ENCODE measurements at regions of chr16 and their contacts with region 1.

Region 1: DNA sequence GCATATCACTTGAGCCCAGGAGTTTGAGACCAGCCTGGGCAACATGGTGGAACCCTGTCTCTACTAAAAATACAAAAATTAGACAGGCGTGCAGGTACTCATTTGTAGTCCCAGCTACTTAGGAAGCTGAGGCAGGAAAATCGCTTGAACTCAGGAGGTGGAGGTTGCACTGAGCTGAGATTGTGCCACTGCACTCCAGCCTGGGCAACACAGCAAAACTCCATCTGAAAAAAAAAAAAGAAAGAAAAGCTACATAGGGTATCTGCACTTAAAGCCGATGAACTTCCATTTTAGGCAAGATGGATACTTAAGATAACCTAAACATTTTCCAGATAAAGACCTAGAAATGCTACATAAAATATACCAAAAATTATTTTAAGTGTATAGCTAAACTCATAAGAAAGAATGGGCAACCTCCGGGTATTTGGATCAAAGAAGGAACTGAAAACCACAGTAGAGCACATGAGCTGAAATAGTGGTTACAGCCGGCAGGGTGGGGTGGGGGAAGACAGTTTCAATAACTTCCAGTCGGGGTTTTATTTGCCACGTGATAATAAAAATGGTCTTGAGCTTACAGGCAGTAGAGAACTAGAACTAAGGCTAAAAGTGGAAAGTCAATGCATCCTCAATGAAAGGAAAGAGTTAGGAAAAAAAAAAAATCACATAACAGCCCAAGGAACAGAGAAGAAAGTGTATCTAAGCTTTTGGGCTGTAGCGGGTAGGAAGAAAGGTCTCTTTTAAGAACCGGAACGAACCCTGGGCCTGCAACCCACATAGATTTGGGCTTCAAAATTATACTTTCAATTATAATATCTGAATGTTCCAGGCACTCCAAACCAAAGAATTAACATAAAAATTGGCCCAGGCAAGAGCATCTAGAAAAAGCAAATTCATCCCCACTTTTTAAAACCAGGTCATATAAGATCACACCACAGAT is 53.1 kb downstream of the CFDP1 start:
- DNase-seq: peak; percentile 81
- H3K4me3 Mint-ChIP-seq: peak overlapping the region; percentile 62
- H3K27ac Mint-ChIP-seq: peak overlapping the region; percentile 68
- H3K4me1 Mint-ChIP-seq: peaks cover 28% of the 10 kb centered on the region
- H3K27me3 Mint-ChIP-seq: peaks cover 33% of the 10 kb centered on the region

Region 2: DNA sequence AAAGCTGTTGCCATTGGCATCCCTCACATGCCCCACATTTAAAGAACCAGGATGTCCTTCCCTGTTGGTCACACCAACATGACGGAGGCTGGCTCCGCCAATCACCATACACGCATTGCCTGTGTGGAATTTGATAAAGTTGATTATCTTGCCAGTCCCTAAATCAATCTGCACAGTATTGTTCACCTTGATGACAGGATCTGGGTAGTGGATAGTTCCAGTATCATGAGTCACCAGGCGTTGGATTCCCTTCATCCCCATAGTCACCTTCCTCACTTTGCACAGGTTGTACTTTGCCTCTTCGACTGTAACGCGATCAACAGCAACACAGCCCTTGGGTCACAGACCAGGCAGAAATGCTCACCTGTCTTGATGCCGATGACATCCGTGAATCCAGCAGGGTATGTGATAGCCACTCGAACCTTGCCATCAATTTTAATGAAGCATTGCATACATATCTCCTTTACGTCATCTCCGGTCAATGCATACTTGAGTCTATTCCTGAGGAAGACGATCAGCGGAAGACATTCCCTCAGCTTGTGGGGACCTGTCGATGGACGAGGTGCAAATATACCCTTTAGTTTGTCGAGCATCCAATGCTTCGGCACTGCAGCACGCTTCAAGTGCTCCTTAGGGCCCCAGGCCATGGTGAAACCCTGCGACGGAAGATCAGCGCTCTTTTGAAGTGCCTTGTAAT is 187.4 kb before region 1 on chr16:
- intact Hi-C with region 1: no loop called
- DNase-seq: no peak
- H3K4me3 Mint-ChIP-seq: no peak overlapping the region
- H3K27ac Mint-ChIP-seq: no peak overlapping the region
- H3K4me1 Mint-ChIP-seq: peaks cover 2% of the 10 kb centered on the region
- H3K27me3 Mint-ChIP-seq: peaks cover 12% of the 10 kb centered on the region

Region 3: GRCh38 chr16:75305364-75306098 is 74.6 kb before region 1 on chr16:
- intact Hi-C with region 1: no loop called
- DNase-seq: peak; percentile 75
- H3K4me3 Mint-ChIP-seq: no peak overlapping the region
- H3K27ac Mint-ChIP-seq: peak overlapping the region; percentile 70
- H3K4me1 Mint-ChIP-seq: peaks cover 19% of the 10 kb centered on the region
- H3K27me3 Mint-ChIP-seq: peaks cover 2% of the 10 kb centered on the region

Region 4: DNA sequence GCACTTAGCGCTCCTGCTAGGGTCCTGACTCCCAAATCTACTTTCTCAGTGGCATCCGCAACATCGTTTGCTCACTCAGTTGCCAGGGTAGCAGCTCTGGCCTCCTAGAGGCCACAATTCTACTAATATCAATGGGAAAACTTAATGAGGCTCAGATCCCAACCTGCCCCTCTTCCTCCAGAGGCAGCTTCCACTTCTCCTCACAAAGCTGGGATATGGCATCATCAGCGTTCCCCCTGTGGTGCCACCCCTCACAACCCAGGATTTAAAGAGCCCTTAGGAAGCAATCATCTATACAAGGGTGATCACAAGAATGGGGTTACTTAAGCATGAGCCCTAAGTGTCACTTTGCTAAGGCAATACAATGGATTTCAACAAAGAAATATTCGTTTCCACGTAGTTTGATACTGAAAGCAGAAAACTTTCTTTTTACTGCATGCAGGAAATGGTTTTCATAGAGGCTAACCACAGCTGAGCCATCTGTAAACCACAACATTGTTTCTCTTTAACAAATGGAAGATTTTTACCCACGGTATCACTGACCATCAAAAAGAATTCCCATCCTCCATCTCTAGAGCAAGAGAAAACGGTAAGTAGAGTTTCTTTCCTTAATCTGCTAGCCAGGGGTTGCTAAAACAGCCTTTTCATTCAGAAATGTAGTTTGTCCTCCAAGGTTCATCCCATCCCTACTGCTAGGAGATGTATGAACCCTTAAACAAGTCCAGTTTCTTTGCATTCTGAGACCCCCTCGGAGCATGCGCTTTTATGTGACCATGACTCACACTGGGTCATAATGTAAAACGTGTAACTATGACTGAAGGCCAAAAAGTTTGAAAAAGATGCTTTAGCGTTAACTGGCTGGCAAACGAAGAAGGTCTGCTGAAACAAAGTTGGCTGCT is 60.4 kb before region 1 on chr16:
- intact Hi-C with region 1: loop called (anchors 1 kb)
- DNase-seq: peak; percentile 74
- H3K4me3 Mint-ChIP-seq: peak overlapping the region; percentile 58
- H3K27ac Mint-ChIP-seq: no peak overlapping the region
- H3K4me1 Mint-ChIP-seq: peaks cover 23% of the 10 kb centered on the region
- H3K27me3 Mint-ChIP-seq: peaks cover 28% of the 10 kb centered on the region

Measured in activated CD4-positive, alpha-beta T cell treated with anti-CD3 and anti-CD28 coated beads, Interleukin-2, amount 10 ng/mL, durations not matched to agents 24 days and 14 days (primary cell).